AG04449 (cell line): ENCODE measurements at regions of chrX and their contacts with region 1.

Region 1: GRCh38 chrX:45801554-45801953 is 600.9 kb upstream of the DIPK2B start:
- DNase-seq: no peak
- H3K4me3 ChIP-seq: no peak overlapping the region
- CTCF ChIP-seq: no peak

Region 2: GRCh38 chrX:45769761-45770582 is 31.6 kb before region 1 on chrX:
- CTCF ChIA-PET with region 1: interaction called, 3 read pairs
- POLR2A ChIA-PET with region 1: interaction called, 17 read pairs
- DNase-seq: no peak
- H3K4me3 ChIP-seq: peak overlapping the region; percentile 65
- CTCF ChIP-seq: no peak

Region 3: GRCh38 chrX:45788941-45789348 is 12.6 kb before region 1 on chrX:
- CTCF ChIA-PET with region 1: interaction called, 10 read pairs
- POLR2A ChIA-PET with region 1: no interaction called
- DNase-seq: no peak
- H3K4me3 ChIP-seq: no peak overlapping the region
- CTCF ChIP-seq: no peak